Activated CD4-positive, alpha-beta memory T cell treated with anti-CD3 and anti-CD28 coated beads for 36 hours (primary cell): ENCODE measurements at regions of chr11 and their contacts with region 1.

Region 1: DNA sequence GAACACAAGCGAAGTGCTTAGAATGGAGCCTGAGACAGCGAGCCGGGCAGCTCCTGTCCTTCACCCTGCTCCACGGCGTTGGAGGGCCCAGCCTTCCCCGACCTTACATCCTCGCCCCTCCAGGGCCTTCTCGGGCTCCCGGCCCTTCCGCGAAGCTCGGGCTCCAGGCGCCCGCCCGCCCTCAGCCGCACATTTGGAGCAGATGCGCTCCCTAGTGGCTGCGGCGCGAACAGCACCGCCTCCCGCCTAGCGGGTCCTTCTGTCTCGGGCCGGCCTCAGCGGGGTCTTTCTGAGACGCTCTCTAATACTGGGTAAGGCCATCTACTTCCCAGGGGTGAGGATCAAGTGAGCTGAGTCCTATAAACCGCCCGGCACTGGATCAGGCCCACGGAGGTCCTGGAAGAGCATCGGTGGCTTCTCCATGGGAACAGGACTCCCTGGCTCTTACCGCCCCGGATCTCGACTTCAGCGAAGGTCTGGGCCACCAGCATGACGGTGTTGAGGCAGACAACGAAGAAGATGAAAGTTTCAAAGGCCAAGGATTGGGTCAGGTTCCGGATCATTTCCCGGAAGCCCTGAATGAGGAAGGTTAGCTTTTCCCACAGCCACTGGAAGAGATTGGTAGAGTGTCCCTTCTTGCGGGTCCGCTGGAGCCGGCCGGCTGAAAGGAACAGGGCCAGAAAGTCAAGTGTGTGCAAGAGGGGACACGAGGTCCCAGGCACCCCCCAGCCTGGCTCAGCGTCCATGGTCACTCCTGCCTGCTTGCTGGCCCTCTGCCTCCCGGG is 3.7 kb downstream of the CATSPER1 start:
- DNase-seq: peak; percentile 85
- H3K4me3 Mint-ChIP-seq: peak overlapping the region; percentile 6
- H3K27ac Mint-ChIP-seq: no peak overlapping the region
- H3K4me1 Mint-ChIP-seq: peaks cover 17% of the 10 kb centered on the region
- H3K27me3 Mint-ChIP-seq: peaks cover 6% of the 10 kb centered on the region

Region 2: DNA sequence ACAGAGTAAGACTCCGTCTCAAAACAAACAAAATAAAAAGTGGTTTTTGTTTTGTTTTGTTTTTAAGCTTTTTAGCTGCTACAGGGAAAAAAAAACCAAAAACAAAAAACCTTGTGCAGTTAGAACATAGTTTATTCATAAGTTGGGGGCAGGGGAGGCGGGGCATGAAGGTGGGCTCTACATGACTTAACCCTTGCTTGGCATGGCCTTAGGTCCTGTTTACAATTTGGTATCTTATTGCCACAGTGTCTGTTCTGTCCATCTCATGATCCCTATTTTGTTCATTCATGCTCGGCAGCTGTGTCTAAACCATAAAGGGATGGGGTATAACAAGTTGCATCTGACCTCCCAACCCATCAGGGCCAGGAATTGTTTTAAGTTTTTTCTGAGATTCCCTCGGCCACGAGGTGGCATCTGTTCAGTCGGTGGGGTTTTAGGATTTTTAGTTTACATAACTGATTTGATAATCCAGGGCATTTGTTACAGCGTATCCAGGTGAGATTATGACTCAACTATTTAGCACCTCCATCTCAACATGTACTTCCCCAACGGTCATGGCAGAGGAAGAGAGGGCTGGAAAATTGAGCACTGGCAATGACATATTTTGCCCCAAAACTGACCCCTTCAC is 248.7 kb before region 1 on chr11:
- CTCF ChIA-PET with region 1: no interaction called
- POLR2A ChIA-PET with region 1: no interaction called
- intact Hi-C with region 1: no loop called
- DNase-seq: no peak
- H3K4me3 Mint-ChIP-seq: no peak overlapping the region
- H3K27ac Mint-ChIP-seq: no peak overlapping the region
- H3K4me1 Mint-ChIP-seq: peaks cover 15% of the 10 kb centered on the region
- H3K27me3 Mint-ChIP-seq: no peaks in the 10 kb centered on the region

Region 3: GRCh38 chr11:65988791-65989592 is 33.6 kb before region 1 on chr11:
- CTCF ChIA-PET with region 1: interaction called, 6 read pairs
- POLR2A ChIA-PET with region 1: no interaction called
- intact Hi-C with region 1: loop called (anchors 1 kb)
- DNase-seq: peak; percentile 95
- H3K4me3 Mint-ChIP-seq: no peak overlapping the region
- H3K27ac Mint-ChIP-seq: peak overlapping the region; percentile 74
- H3K4me1 Mint-ChIP-seq: peaks cover 4% of the 10 kb centered on the region
- H3K27me3 Mint-ChIP-seq: no peaks in the 10 kb centered on the region

Region 4: DNA sequence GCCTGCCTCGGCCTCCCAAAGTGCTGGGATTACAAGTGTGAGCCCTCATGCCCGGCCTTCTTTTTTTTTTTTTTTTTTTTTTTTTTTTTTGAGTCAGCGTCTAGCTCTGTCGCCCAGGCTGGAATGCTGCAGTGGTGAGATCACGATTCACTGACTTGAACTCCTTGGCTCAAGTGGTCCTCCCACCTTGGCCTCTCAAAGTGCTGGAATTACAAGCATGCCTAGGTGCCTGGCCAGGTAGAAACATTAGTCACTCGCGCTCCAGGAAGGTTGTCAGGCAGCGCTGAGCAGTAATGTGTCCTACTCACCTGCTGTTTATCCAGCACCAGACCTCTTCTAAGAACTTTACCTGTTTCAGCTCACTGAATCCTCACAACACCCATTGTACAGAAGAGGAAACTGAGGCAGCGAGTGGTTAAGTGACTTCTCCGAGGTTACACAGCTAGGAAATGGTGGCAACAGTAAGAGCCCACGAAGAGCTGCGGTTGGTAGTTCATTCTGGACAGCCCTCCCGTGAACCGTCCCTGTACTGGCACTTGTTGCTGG is 11.3 kb before region 1 on chr11:
- CTCF ChIA-PET with region 1: interaction called, 21 read pairs
- POLR2A ChIA-PET with region 1: no interaction called
- intact Hi-C with region 1: no loop called
- DNase-seq: no peak
- H3K4me3 Mint-ChIP-seq: no peak overlapping the region
- H3K27ac Mint-ChIP-seq: no peak overlapping the region
- H3K4me1 Mint-ChIP-seq: peaks cover 2% of the 10 kb centered on the region
- H3K27me3 Mint-ChIP-seq: peaks cover 21% of the 10 kb centered on the region

Region 5: GRCh38 chr11:66045177-66045639 is 22.6 kb after region 1 on chr11:
- CTCF ChIA-PET with region 1: interaction called, 36 read pairs
- POLR2A ChIA-PET with region 1: no interaction called
- intact Hi-C with region 1: no loop called
- DNase-seq: peak; percentile 88
- H3K4me3 Mint-ChIP-seq: peak overlapping the region; percentile 42
- H3K27ac Mint-ChIP-seq: peak overlapping the region; percentile 82
- H3K4me1 Mint-ChIP-seq: peaks cover 21% of the 10 kb centered on the region
- H3K27me3 Mint-ChIP-seq: peaks cover 5% of the 10 kb centered on the region

Region 6: DNA sequence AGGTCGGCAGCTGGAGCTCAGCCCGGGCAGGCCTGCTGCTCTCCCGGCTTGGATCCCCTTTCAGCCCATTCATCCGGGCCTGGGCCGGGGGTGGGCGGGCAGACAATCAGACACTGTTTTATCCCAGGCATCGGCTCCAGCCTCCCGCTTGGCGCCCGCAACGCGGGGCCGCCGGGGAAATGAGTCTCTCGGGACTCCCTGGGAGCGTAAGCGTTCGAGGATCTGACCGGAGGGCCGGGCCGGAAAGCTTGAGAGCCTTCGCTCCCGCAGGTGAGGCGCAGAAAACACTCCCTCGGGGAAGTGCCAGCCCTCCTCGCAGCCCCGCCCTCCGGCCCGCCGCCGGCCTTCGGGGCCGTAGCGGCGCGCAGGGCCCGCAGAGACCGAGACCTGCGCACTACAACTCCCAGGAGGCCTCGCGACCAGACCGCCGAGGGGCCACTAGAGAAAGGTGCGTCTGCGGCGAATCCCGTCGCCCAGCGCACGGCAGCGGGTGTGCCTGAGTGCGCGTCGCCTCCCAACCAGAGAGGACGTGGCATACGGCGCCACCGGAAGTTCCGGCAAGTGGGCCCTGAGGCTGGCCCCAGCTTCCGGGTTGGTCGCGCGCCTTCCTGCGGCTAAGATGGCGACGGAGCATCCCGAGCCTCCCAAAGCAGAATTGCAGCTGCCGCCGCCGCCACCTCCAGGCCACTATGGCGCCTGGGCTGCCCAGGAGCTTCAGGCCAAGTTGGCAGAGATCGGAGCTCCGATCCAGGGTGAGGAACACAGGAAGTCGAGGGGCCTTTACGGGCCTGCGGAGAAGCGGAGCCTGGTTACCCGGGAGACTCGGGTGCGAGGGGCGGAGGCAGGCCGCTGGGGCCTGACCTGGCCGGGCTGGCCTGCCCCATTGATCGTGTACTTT is 29.4 kb after region 1 on chr11 and contains the start of gene SF3B2:
- CTCF ChIA-PET with region 1: interaction called, 36 read pairs
- POLR2A ChIA-PET with region 1: no interaction called
- intact Hi-C with region 1: no loop called
- DNase-seq: peak; percentile 99
- H3K4me3 Mint-ChIP-seq: peak within 1 kb of the TSS; percentile 100
- H3K27ac Mint-ChIP-seq: peak within 1 kb of the TSS; percentile 97
- H3K4me1 Mint-ChIP-seq: peaks cover 41% of the 10 kb centered on the region
- H3K27me3 Mint-ChIP-seq: peaks cover 5% of the 10 kb centered on the region
- total RNA-seq, gene SF3B2: 271 to 274 TPM